ENCODE measurements at regions of chr20 and their contacts with region 1.

Region 1: GRCh38 chr20:45857114-45857881 is at the starts of genes ACOT8 and ZSWIM3:
- DNase-seq: peak; percentile 84 to 99 (median 94)

Region 2: DNA sequence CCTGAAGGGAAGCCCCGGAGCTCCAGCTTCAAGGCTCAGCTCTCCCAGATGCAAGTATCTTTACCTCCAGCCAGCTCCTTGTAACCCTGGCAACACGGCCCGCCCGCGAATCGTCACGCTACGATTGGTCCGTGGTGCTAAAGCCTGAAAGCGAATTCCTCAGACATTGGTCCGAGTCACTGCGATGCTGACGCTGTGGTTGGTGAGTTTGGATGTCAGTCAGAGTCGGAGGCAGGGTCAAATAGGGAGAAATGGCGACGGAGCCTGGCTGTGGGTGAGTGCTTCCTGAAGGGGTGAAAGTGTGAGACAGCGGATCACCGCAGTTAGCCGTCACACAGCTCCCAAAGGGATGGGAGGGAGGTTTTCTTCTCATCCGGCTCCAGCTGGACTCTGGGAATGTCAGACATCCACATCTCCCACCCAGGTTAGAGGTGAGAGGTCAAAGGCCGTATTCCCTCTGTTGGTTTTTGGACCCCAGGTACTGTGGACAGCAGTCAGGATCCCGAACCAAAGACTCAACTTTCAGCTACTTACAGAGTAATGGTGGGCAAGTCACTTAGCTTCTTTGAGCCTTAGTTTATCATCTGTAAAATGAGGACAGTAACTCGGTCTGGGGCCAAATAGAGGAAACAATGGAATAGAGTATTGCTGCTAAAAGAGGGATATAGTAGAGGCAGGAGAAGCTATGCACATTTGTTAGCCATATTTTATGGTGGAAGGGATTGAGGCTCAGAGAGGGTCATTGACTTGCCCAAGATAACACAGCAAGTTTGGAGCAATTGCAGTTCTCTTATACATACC is 23.9 kb after region 1 on chr20 and contains the start of gene ZSWIM1:
- intact Hi-C with region 1: loop called (anchors 1 kb)
- DNase-seq: peak; percentile 98 to 100 (median 100)

Region 3: DNA sequence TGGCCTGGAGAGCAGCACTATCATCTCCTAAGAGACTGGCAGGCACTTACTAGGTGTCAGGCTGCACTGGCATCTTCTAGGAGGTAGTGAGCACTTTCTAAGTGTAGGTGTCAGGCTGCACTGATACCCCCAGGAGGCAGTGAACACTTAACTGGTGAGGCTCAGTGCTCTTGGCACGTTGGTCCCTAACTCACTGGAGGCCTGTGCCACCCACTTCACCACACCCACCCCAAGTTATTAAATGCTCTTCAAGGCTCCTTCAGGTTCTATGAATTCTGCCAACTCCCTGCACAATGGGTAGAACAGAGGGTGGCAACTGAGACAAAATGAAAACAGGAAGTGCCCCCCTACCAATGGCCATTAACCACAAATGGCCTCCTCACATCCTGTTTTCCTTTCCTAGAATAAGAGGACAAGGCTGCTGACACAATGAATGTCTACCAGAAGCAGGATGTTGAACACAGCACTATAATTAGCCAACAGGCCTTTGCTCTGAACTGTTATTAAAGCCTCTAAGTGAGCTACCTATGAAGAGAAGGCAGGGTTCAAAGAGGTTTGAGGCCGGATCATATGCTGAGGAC is 203.1 kb after region 1 on chr20:
- intact Hi-C with region 1: no loop called
- DNase-seq: no peak

Measured in posterior cingulate gyrus (tissue), 11 donors.